ENCODE measurements at regions of chr1 and their contacts with region 1.

Region 1: GRCh38 chr1:28088168-28088961 is at the start of gene EYA3:
- DNase-seq: peak; percentile 96 to 99 (median 99)
- ATAC-seq: peak; percentile 99
- H3K4me3 ChIP-seq: peak within 1 kb of the TSS; percentile 92
- H3K4me3 Mint-ChIP-seq: peak within 1 kb of the TSS; percentile 93 to 98 (median 97)
- H3K27ac ChIP-seq: peak within 1 kb of the TSS; percentile 82
- H3K27ac Mint-ChIP-seq: peak within 1 kb of the TSS; percentile 89 to 98 (median 94)
- H3K4me1 ChIP-seq: peaks cover 11 to 12% of the 10 kb centered on the region in 2 donors
- H3K4me1 Mint-ChIP-seq: peaks cover 30 to 56% (median 42%) of the 10 kb centered on the region in 7 donors
- H3K27me3 ChIP-seq: no peaks in the 10 kb centered on the region
- H3K27me3 Mint-ChIP-seq: peaks cover 0 to 8% (median 0%) of the 10 kb centered on the region in 5 donors
- total RNA-seq, gene EYA3: 14.5 to 31.7 (median 19.2) TPM

Region 2: GRCh38 chr1:27321813-27322577 is 766.4 kb before region 1 on chr1 and contains the start of gene TMEM222:
- CTCF ChIA-PET with region 1: no interaction called
- POLR2A ChIA-PET with region 1: no interaction called
- intact Hi-C with region 1: loop called in 1 of 2 experiments (anchors 5 kb)
- DNase-seq: peak; percentile 94 to 99 (median 97)
- ATAC-seq: peak; percentile 98
- H3K4me3 ChIP-seq: peak within 1 kb of the TSS; percentile 91
- H3K4me3 Mint-ChIP-seq: peak within 1 kb of the TSS; percentile 91 to 99 (median 96)
- H3K27ac ChIP-seq: peak within 1 kb of the TSS; percentile 95
- H3K27ac Mint-ChIP-seq: peak within 1 kb of the TSS; percentile 88 to 97 (median 93)
- H3K4me1 ChIP-seq: peaks cover 18 to 22% of the 10 kb centered on the region in 2 donors
- H3K4me1 Mint-ChIP-seq: peaks cover 22 to 59% (median 54%) of the 10 kb centered on the region in 7 donors
- H3K27me3 ChIP-seq: no peaks in the 10 kb centered on the region
- H3K27me3 Mint-ChIP-seq: peaks cover 0 to 5% (median 3%) of the 10 kb centered on the region in 5 donors
- total RNA-seq, gene TMEM222: 23.7 to 44.0 (median 41.9) TPM

Region 3: DNA sequence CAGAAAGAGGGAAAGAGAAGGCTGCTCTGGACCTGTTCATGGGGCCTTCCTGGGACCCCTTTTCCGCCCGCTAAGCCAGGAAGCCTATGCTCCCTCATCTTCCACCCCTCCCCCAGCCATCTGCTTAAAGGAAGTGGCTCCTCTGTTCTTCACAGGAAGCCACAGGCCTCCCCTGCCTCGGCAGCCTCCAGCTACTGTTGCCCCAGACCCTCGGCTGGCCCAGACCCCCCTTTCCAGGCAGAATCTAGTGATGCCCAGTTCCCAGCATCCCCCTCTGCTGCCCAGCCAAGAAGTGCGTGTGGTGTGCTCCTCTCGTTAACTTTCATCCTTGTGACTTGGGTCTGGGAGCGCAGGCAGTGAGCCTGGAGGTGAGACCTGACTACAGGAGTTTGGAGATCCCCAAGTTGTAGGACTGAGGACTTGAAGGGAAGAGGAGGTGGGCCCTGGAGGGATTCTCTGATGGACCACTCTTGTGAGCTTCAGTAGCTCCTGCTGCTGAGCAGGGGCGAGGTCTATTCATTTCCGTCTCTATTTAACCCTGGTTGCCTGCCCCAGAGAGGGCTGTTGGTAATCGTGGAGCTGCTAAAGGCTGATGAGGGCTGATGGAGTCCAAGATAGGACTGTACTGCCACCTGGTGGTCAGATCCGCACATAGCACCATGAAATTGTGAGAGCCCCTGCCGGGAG is 425.5 kb before region 1 on chr1:
- CTCF ChIA-PET with region 1: no interaction called
- POLR2A ChIA-PET with region 1: no interaction called
- intact Hi-C with region 1: no loop called
- DNase-seq: peak; percentile 76 to 94 (median 88)
- ATAC-seq: peak; percentile 80
- H3K4me3 ChIP-seq: peak overlapping the region; percentile 64
- H3K4me3 Mint-ChIP-seq: peak overlapping the region; percentile 82 to 94 (median 90)
- H3K27ac ChIP-seq: peak overlapping the region; percentile 81
- H3K27ac Mint-ChIP-seq: peak overlapping the region; percentile 95 to 100 (median 98)
- H3K4me1 ChIP-seq: peaks cover 38 to 46% of the 10 kb centered on the region in 2 donors
- H3K4me1 Mint-ChIP-seq: peaks cover 39 to 62% (median 48%) of the 10 kb centered on the region in 7 donors
- H3K27me3 ChIP-seq: no peaks in the 10 kb centered on the region
- H3K27me3 Mint-ChIP-seq: no peaks in the 10 kb centered on the region

Region 4: GRCh38 chr1:27772933-27773825 is 315.2 kb before region 1 on chr1 and contains the start of gene STX12:
- CTCF ChIA-PET with region 1: interaction called, 3 read pairs
- POLR2A ChIA-PET with region 1: interaction called, 3 read pairs
- intact Hi-C with region 1: loop called in 1 of 2 experiments (anchors 1 kb)
- DNase-seq: peak; percentile 97 to 100 (median 98)
- ATAC-seq: peak; percentile 96
- H3K4me3 ChIP-seq: peak within 1 kb of the TSS; percentile 97
- H3K4me3 Mint-ChIP-seq: peak within 1 kb of the TSS; percentile 84 to 97 (median 94)
- H3K27ac ChIP-seq: peak within 1 kb of the TSS; percentile 94
- H3K27ac Mint-ChIP-seq: peak within 1 kb of the TSS; percentile 90 to 99 (median 96)
- H3K4me1 ChIP-seq: peaks cover 10 to 13% of the 10 kb centered on the region in 2 donors
- H3K4me1 Mint-ChIP-seq: peaks cover 26 to 43% (median 37%) of the 10 kb centered on the region in 7 donors
- H3K27me3 ChIP-seq: no peaks in the 10 kb centered on the region
- H3K27me3 Mint-ChIP-seq: no peaks in the 10 kb centered on the region
- total RNA-seq, gene STX12: 23.9 to 38.7 (median 28.9) TPM

Region 5: GRCh38 chr1:27872059-27872801 is 216.1 kb before region 1 on chr1 and contains the start of gene THEMIS2:
- CTCF ChIA-PET with region 1: no interaction called
- POLR2A ChIA-PET with region 1: no interaction called
- intact Hi-C with region 1: loop called in 1 of 2 experiments (anchors 1 kb)
- DNase-seq: peak; percentile 46 to 81 (median 67)
- ATAC-seq: peak; percentile 81
- H3K4me3 ChIP-seq: peak within 1 kb of the TSS; percentile 87
- H3K4me3 Mint-ChIP-seq: peak within 1 kb of the TSS; percentile 89 to 99 (median 98)
- H3K27ac ChIP-seq: peak within 1 kb of the TSS; percentile 79
- H3K27ac Mint-ChIP-seq: peak within 1 kb of the TSS; percentile 81 to 96 (median 91)
- H3K4me1 ChIP-seq: peaks cover 34 to 39% of the 10 kb centered on the region in 2 donors
- H3K4me1 Mint-ChIP-seq: peaks cover 29 to 70% (median 48%) of the 10 kb centered on the region in 7 donors
- H3K27me3 ChIP-seq: no peaks in the 10 kb centered on the region
- H3K27me3 Mint-ChIP-seq: no peaks in the 10 kb centered on the region
- total RNA-seq, gene THEMIS2: 48.8 to 234 (median 72.3) TPM

Region 6: DNA sequence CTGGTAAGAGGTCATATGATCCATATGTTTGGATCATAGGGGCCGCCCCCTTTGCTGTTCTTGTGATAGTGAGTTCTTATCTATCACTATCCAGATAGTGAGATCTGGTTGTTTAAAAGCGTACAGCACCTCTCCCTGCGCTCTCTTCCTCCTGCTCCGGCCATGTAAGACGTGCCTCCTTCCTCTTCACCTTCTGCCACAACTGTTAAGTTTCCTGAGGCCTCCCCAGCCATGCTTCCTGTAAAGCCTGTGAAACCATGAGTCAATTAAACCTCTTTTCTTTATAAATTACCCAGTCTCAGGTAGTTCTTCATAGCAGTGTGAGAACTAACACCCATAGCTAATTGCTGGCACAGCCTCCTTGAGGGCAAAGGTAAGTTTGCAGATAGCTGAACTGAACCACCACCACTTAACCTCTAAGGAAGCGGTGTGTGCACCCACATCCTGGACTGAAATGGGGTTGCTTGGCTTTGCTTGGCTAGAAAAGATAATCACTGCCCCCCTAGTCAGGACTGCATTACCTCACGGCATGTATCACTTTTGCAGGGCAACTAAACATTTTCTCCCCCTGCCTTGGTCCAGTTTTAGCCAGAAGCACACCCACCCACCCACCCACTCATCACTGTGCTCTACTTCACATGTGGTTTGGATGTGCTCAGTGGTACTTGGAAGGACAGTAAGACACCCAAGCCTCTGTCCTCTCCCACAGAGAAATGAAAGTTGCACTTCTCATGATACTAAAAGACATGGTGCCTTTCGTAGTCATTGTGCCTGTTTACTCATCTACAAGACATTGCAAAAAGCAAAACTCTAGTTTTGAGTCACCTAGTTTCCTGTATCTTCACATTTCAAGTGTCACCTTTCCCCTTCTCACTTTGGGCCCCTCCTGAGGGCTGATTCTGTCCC is 111.2 kb after region 1 on chr1:
- CTCF ChIA-PET with region 1: interaction called, 4 read pairs
- POLR2A ChIA-PET with region 1: no interaction called
- intact Hi-C with region 1: loop called in 1 of 2 experiments (anchors 1 kb)
- DNase-seq: peak in 8 of 9 donors; percentile 26 to 73 (median 68)
- ATAC-seq: peak; percentile 91
- H3K4me3 ChIP-seq: peak overlapping the region; percentile 8
- H3K4me3 Mint-ChIP-seq: peak overlapping the region; percentile 54 to 86 (median 71)
- H3K27ac ChIP-seq: no peak overlapping the region
- H3K27ac Mint-ChIP-seq: peak overlapping the region; percentile 65 to 92 (median 80)
- H3K4me1 ChIP-seq: peaks cover 23 to 35% of the 10 kb centered on the region in 2 donors
- H3K4me1 Mint-ChIP-seq: peaks cover 24 to 51% (median 43%) of the 10 kb centered on the region in 7 donors
- H3K27me3 ChIP-seq: no peaks in the 10 kb centered on the region
- H3K27me3 Mint-ChIP-seq: no peaks in the 10 kb centered on the region

Region 7: GRCh38 chr1:28505406-28506187 is 417.2 kb after region 1 on chr1 and contains the start of gene RCC1:
- CTCF ChIA-PET with region 1: no interaction called
- POLR2A ChIA-PET with region 1: no interaction called
- intact Hi-C with region 1: loop called (anchors 1 kb)
- DNase-seq: peak; percentile 78 to 98 (median 96)
- ATAC-seq: peak; percentile 97
- H3K4me3 ChIP-seq: peak within 1 kb of the TSS; percentile 79
- H3K4me3 Mint-ChIP-seq: peak within 1 kb of the TSS; percentile 94 to 100 (median 99)
- H3K27ac ChIP-seq: peak within 1 kb of the TSS; percentile 88
- H3K27ac Mint-ChIP-seq: peak within 1 kb of the TSS; percentile 96 to 100 (median 99)
- H3K4me1 ChIP-seq: peaks cover 29 to 36% of the 10 kb centered on the region in 2 donors
- H3K4me1 Mint-ChIP-seq: peaks cover 29 to 48% (median 41%) of the 10 kb centered on the region in 7 donors
- H3K27me3 ChIP-seq: no peaks in the 10 kb centered on the region
- H3K27me3 Mint-ChIP-seq: peaks cover 0 to 3% (median 0%) of the 10 kb centered on the region in 5 donors
- total RNA-seq, gene RCC1: 9.8 to 60.7 (median 19.7) TPM

Region 8: DNA sequence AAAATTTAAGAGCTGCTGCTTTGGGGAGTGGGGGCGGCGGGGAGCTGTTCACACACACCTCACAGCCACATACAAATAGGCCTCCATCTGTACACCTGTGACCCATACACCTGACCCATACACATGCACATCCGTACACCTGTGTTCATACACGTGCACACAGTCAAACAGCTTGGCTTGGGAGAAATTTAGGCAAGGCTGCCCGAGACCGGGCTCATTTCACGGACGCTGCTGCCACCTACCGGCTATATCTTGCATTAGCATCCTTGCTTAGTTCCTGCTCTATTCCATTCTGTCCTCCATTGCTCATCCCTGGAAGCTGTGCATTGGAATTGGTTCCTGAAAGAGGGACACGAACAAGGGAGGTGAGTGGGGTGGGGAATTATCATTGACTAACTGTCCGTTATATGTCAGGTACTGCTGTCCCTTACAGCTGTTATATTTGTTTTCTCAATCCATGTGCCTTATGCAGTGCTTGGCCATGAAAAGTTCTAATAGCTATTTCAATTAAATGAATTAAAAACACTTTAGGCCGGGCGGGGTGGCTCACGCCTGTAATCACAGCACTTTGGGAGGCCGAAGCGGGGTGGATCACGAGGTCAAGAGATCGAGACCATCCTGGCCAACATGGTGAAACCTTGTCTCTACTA is 788.9 kb after region 1 on chr1:
- CTCF ChIA-PET with region 1: interaction called, 8 read pairs
- POLR2A ChIA-PET with region 1: no interaction called
- intact Hi-C with region 1: loop called in 1 of 2 experiments (anchors 1 kb)
- DNase-seq: peak; percentile 48 to 77 (median 67)
- ATAC-seq: peak; percentile 86
- H3K4me3 ChIP-seq: no peak overlapping the region
- H3K4me3 Mint-ChIP-seq: peak overlapping the region in 1 of 10 donors; percentile 32
- H3K27ac ChIP-seq: no peak overlapping the region
- H3K27ac Mint-ChIP-seq: no peak overlapping the region
- H3K4me1 ChIP-seq: no peaks in the 10 kb centered on the region
- H3K4me1 Mint-ChIP-seq: peaks cover 4 to 16% (median 7%) of the 10 kb centered on the region in 7 donors
- H3K27me3 ChIP-seq: no peaks in the 10 kb centered on the region
- H3K27me3 Mint-ChIP-seq: peaks cover 0 to 17% (median 5%) of the 10 kb centered on the region in 5 donors

Measured in naive thymus-derived CD4-positive, alpha-beta T cell (primary cell).